ENCODE measurements at regions of chr17 and their contacts with region 1.

Region 1: DNA sequence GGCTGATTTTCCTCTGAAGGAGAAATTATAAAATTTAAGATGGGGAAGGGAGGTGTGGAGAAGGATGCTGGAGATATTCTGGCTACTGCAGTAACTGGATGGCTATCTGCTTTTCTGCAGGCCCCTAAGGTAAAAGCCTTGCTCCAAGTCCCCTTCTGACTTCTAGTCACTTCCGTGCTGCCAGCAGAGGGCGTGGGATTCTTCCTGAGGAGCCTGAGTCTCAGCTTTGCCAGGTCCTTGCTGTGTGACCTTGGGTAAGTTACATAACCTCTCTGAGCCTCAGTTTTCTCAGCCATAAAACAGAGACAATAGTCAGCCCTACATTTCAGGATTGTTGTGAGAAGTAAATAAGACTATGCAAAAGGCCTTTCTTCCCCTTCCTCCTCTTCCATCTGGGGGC is 24.3 kb upstream of the TMEM220 start:
- DNase-seq: peak in 1 of 5 donors; percentile 34
- ATAC-seq: no peak
- H3K4me3 ChIP-seq: no peak overlapping the region
- H3K27ac ChIP-seq: no peak overlapping the region
- H3K4me1 ChIP-seq: peaks cover 0 to 6% (median 0%) of the 10 kb centered on the region in 12 donors
- H3K27me3 ChIP-seq: no peaks in the 10 kb centered on the region
- CTCF ChIP-seq: peak in 5 of 12 donors; percentile 8 to 35 (median 21)
- POLR2A ChIP-seq: no peak

Region 2: GRCh38 chr17:10683853-10684252 is 70.3 kb before region 1 on chr17:
- intact Hi-C with region 1: no loop called
- DNase-seq: no peak
- ATAC-seq: no peak
- H3K4me3 ChIP-seq: no peak overlapping the region
- H3K27ac ChIP-seq: no peak overlapping the region
- H3K4me1 ChIP-seq: no peaks in the 10 kb centered on the region
- H3K27me3 ChIP-seq: no peaks in the 10 kb centered on the region
- CTCF ChIP-seq: peak in 8 of 12 donors; percentile 8 to 45 (median 28)
- POLR2A ChIP-seq: no peak

Region 3: DNA sequence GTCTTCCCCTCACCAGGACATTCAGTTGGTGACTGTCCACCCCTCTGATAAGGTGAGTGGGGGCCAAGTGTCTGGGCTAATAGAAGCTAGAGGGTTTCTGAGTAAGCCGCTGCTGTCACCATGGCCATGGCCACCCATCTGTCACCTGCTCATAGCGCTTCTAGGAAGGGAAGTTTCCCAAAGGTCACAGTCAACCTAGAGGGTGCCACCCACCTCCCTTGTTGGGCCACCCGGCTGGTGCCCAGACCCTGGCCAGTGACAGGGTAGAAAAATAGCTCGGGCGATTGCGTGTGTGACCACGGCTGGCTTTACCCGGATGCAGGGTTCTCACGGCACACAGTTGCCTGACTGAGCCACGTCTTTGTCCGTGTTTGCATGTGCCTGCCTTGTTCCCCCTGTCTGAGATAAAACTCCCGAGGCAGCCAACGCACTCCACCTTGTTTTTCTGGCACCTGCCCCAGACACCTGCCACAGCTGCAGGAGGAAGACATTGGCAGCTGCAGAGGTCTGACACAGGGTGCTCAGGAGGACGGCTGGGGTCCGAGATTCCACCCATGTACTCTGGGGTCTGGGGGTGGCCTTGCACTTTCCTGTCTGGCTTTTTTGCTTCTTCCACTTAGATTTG is 83.0 kb after region 1 on chr17:
- intact Hi-C with region 1: loop called in 2 of 10 experiments (anchors 5 kb)
- DNase-seq: no peak
- ATAC-seq: no peak
- H3K4me3 ChIP-seq: no peak overlapping the region
- H3K27ac ChIP-seq: no peak overlapping the region
- H3K4me1 ChIP-seq: no peaks in the 10 kb centered on the region
- H3K27me3 ChIP-seq: peaks cover 0 to 10% (median 0%) of the 10 kb centered on the region in 9 donors
- CTCF ChIP-seq: no peak
- POLR2A ChIP-seq: no peak

Measured in heart left ventricle (tissue), 16 donors.